ENCODE measurements at regions of chr3 and their contacts with region 1.

Region 1: DNA sequence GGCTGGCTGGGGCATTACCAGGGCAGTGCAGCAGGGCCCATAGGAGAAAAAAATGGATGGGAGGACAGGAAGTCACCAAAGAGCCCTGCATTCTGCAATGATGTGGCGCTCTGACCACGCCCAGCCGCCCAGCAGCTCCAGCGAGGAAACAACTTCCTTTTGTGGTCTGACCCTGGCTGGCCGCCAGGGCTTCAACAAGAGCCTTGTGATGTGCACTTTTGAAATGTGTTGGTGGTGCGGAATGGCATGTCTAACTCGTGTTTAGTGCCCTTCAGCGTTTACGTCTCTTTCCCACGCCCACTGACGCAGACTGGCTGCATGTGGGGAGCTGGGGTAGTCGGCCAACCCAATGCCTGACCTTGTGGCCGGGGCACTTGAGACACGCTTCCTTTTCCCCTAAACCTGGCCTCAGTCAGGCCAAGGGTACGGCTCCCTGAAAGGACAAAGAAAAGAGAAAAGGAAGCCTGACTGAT is 81.9 kb upstream of the CTNNB1 start:
- DNase-seq: peak; percentile 95
- ATAC-seq: peak; percentile 87
- H3K4me3 ChIP-seq: peak overlapping the region in 2 of 3 experiments; percentile 34 to 55; a peak in 5 of 6 replicates
- H3K27ac ChIP-seq: peak overlapping the region; percentile 46
- H3K4me1 ChIP-seq: peaks cover 52% of the 10 kb centered on the region
- H3K27me3 ChIP-seq: peaks cover 0 to 3% of the 10 kb centered on the region in 2 experiments; a peak in 1 of 5 replicates
- CTCF ChIP-seq: peak; percentile 28; the same call in 1 of the 2 replicates
- EP300 ChIP-seq: peak in 1 of 2 experiments; percentile 15; a peak in 1 of 4 replicates
- POLR2A ChIP-seq: no peak
- RAD21 ChIP-seq: no peak

Region 2: DNA sequence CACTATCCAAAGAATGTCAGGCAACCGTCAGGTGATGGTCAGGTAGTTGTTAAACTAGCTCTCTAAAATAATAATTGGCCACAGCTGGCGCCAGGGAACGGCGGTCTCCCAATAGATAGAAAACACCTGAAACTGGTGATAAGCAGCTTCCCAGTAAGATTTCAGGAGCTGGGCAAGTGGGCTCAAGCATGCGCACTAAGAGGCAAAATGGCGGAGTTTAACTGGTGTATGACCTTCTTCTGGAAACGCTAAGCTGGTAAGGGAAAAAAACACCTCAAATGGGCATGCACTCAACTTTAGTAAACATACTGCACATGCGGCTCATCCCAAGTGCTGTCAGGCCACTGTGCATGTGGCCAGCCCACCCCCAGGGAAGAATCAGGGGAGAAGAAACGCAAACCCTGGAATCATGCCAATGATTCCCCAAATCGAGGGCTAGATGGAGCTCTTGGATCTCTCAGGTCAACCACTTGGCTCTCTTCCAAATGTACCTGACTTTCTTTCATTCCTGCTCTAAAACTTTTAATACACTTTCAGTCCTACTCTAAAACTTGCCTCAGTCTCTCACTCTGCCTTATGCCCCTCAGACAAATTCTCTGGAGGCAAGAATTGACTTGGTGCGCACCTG is 397.7 kb before region 1 on chr3:
- CTCF ChIA-PET with region 1: no interaction called
- POLR2A ChIA-PET with region 1: no interaction called
- in situ Hi-C with region 1: no loop called
- intact Hi-C with region 1: loop called (anchors 1 kb)
- DNase-seq: peak; percentile 59
- ATAC-seq: peak; percentile 54
- H3K4me3 ChIP-seq: peak overlapping the region in 2 of 3 experiments; percentile 28 to 30; a peak in 2 of 6 replicates
- H3K27ac ChIP-seq: no peak overlapping the region
- H3K4me1 ChIP-seq: peaks cover 16% of the 10 kb centered on the region
- H3K27me3 ChIP-seq: peaks cover 0 to 1% of the 10 kb centered on the region in 2 experiments; a peak in 1 of 5 replicates
- CTCF ChIP-seq: peak; percentile 79
- EP300 ChIP-seq: no peak
- POLR2A ChIP-seq: no peak
- RAD21 ChIP-seq: no peak

Region 3: DNA sequence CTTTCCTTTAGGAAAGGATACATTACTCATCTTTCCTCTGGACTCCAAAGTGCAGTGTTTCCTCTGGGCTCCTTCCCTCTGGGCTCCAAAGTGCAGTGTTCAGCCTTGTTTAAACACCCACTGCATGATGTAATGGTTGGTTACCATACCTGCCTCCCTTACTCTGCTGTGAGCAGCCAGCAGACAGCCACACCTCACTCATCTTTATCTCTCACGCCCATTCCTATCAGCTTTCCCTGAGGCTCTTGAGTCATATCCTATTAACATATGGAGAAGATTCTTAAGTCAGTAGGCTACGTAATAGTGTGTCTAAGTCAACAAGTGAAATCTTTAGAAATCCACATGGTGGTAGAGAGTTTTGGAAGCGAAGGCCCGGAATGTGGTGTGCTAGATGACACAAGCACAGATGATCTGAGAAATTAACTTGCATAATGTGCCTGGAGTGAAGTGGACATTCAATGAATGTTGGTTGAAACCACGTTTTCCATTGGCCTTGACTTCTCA is 15.3 kb before region 1 on chr3:
- CTCF ChIA-PET with region 1: no interaction called
- POLR2A ChIA-PET with region 1: no interaction called
- in situ Hi-C with region 1: no loop called
- intact Hi-C with region 1: no loop called
- DNase-seq: peak; percentile 74
- ATAC-seq: peak; percentile 98
- H3K4me3 ChIP-seq: no peak overlapping the region
- H3K27ac ChIP-seq: no peak overlapping the region
- H3K4me1 ChIP-seq: peaks cover 38% of the 10 kb centered on the region
- H3K27me3 ChIP-seq: peaks cover 0 to 4% of the 10 kb centered on the region in 2 experiments; a peak in 1 of 5 replicates
- CTCF ChIP-seq: no peak
- EP300 ChIP-seq: peak in 1 of 2 experiments; percentile 44; a peak in 2 of 4 replicates
- POLR2A ChIP-seq: no peak
- RAD21 ChIP-seq: no peak

Region 4: DNA sequence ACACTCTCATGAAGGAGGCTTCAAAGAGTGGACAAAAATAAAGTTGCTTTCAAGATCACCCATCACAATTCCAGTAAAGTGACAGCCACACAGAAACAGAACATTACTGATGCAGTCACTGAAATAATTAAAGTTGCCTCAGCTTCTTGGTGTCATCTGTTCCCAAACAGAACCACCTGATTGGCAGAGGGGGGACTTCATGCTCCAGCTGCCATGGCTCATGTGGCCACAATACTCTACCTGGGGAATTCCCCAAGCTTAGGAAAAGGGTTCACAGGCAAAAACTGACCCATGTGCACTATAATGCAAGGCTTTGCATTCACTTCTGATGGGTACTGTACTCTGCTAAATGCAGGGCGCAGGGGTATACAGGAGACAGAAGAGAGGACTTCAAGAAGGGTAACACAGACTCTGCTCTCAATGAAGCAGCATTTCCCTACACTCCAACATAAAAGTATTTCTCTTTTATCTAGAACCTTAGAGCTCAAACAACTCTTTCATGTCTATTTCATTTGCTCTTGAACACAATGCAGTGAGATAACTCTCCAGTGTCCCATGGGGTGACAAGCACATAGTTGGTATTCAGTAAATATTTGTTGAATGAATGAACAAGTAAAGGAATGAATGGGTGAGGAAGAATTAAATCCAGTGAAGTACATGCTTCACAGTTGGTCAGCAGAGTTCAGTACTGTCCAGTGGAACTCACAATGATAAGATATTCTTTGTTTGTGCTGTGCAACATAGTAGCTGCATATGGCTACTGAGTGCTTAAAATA is 73.3 kb after region 1 on chr3:
- CTCF ChIA-PET with region 1: no interaction called
- POLR2A ChIA-PET with region 1: no interaction called
- in situ Hi-C with region 1: no loop called
- intact Hi-C with region 1: loop called (anchors 1 kb)
- DNase-seq: peak; percentile 57
- ATAC-seq: peak; percentile 40; the same call in 2 of the 3 replicates
- H3K4me3 ChIP-seq: no peak overlapping the region
- H3K27ac ChIP-seq: no peak overlapping the region
- H3K4me1 ChIP-seq: peaks cover 16% of the 10 kb centered on the region
- H3K27me3 ChIP-seq: peaks cover 0 to 8% of the 10 kb centered on the region in 2 experiments; a peak in 1 of 5 replicates
- CTCF ChIP-seq: no peak
- EP300 ChIP-seq: no peak
- POLR2A ChIP-seq: no peak
- RAD21 ChIP-seq: no peak